ENCODE measurements at regions of chr12 and their contacts with region 1.

Region 1: GRCh38 chr12:90695415-90695814 is 259.6 kb downstream of the CCER1 start:
- DNase-seq: no peak
- ATAC-seq: no peak
- H3K4me3 ChIP-seq: no peak overlapping the region
- H3K27ac ChIP-seq: no peak overlapping the region
- H3K4me1 ChIP-seq: no peaks in the 10 kb centered on the region
- H3K27me3 ChIP-seq: no peaks in the 10 kb centered on the region
- CTCF ChIP-seq: peak in 7 of 9 donors; percentile 6 to 40 (median 31)

Region 2: GRCh38 chr12:90854136-90854689 is 158.8 kb after region 1 on chr12:
- intact Hi-C with region 1: loop called in 3 of 10 experiments (anchors 10 kb)
- DNase-seq: peak in 1 of 2 donors; percentile 26
- ATAC-seq: peak in 2 of 8 donors; percentile 42 to 65
- H3K4me3 ChIP-seq: no peak overlapping the region
- H3K27ac ChIP-seq: no peak overlapping the region
- H3K4me1 ChIP-seq: peaks cover 0 to 17% (median 3%) of the 10 kb centered on the region in 9 donors
- H3K27me3 ChIP-seq: no peaks in the 10 kb centered on the region
- CTCF ChIP-seq: peak; percentile 48 to 82 (median 71)

Region 3: DNA sequence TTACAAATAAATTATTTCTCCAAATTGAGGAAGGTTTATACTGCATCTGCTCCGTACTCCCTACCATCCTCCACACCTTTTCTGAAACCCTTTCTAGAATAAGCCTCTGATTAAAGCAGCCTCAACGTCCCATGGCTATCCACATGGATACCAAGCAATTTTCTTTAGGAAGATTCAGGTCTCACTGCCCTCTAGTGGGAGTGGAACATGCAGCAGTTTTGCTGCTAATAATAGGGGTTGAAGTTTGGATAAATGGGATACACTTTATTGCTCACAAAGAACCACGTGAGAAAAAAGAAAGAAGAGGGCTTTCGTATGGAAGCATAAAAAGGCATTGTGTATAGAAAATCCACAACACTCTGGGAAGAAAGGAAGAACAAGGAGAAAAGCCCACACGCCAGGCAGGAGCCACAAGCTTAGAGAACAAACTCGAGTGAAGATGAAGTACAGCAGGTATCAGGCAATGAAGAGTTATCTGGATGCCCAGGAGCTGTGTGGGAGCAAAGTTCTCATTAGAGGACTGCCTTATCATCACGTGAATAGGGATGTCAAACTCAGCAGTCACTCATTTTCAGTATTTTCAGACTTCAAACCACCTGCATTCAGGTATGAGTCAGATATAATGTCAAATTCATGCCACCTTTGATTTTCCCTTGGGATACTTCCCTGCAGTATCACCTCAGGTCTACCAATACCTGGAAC is 213.8 kb after region 1 on chr12:
- intact Hi-C with region 1: loop called in 1 of 10 experiments (anchors 10 kb)
- DNase-seq: peak in 1 of 2 donors; percentile 16
- ATAC-seq: peak in 2 of 8 donors; percentile 37 to 70
- H3K4me3 ChIP-seq: no peak overlapping the region
- H3K27ac ChIP-seq: no peak overlapping the region
- H3K4me1 ChIP-seq: no peaks in the 10 kb centered on the region
- H3K27me3 ChIP-seq: no peaks in the 10 kb centered on the region
- CTCF ChIP-seq: peak; percentile 55 to 79 (median 71)

Measured in heart right ventricle (tissue), 16 donors.